Naive thymus-derived CD4-positive, alpha-beta T cell (primary cell): ENCODE measurements at regions of chr5 and their contacts with region 1.

Region 1: GRCh38 chr5:140261403-140262171 is 41.3 kb downstream of the PFDN1 start:
- DNase-seq: peak in 2 of 9 donors; percentile 27
- ATAC-seq: peak; percentile 91
- H3K4me3 ChIP-seq: no peak overlapping the region
- H3K4me3 Mint-ChIP-seq: peak overlapping the region in 2 of 10 donors; percentile 10 to 18
- H3K27ac ChIP-seq: no peak overlapping the region
- H3K27ac Mint-ChIP-seq: peak overlapping the region in 7 of 9 donors; percentile 10 to 85 (median 50)
- H3K4me1 ChIP-seq: peaks cover 11 to 27% of the 10 kb centered on the region in 2 donors
- H3K4me1 Mint-ChIP-seq: peaks cover 25 to 67% (median 62%) of the 10 kb centered on the region in 7 donors
- H3K27me3 ChIP-seq: no peaks in the 10 kb centered on the region
- H3K27me3 Mint-ChIP-seq: no peaks in the 10 kb centered on the region

Region 2: DNA sequence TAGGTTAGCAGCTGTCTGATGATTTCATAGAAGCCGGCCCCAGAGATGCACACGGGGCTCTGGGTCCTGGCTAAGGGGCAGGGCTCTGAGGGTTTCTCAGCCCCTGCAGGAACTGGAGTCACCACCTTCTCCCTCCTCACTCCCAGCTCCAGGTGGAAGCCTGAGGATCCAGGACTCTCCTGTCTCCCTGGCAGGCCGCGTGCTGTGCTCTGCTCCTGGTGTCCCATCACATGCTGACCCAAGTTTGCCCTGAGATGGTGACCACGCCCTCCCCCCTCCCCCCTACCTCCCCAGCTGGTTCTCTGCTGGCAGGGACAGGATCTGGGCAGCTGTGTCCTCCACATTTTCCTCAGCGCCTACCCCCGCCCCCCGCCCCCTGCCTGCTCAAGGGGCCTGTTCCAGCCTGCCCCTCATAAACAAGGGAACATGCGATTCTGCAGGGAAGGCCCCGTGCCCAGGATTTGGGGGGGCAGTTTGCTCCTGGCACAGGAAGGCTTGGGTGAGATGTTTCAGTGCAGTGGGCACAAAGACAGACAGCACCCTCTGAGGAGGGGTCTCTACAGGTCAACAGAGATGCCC is 378.5 kb before region 1 on chr5:
- CTCF ChIA-PET with region 1: no interaction called
- POLR2A ChIA-PET with region 1: no interaction called
- intact Hi-C with region 1: no loop called
- DNase-seq: no peak
- ATAC-seq: no peak
- H3K4me3 ChIP-seq: no peak overlapping the region
- H3K4me3 Mint-ChIP-seq: no peak overlapping the region
- H3K27ac ChIP-seq: no peak overlapping the region
- H3K27ac Mint-ChIP-seq: no peak overlapping the region
- H3K4me1 ChIP-seq: no peaks in the 10 kb centered on the region
- H3K4me1 Mint-ChIP-seq: peaks cover 0 to 2% (median 0%) of the 10 kb centered on the region in 7 donors
- H3K27me3 ChIP-seq: no peaks in the 10 kb centered on the region
- H3K27me3 Mint-ChIP-seq: peaks cover 0 to 9% (median 4%) of the 10 kb centered on the region in 5 donors

Region 3: DNA sequence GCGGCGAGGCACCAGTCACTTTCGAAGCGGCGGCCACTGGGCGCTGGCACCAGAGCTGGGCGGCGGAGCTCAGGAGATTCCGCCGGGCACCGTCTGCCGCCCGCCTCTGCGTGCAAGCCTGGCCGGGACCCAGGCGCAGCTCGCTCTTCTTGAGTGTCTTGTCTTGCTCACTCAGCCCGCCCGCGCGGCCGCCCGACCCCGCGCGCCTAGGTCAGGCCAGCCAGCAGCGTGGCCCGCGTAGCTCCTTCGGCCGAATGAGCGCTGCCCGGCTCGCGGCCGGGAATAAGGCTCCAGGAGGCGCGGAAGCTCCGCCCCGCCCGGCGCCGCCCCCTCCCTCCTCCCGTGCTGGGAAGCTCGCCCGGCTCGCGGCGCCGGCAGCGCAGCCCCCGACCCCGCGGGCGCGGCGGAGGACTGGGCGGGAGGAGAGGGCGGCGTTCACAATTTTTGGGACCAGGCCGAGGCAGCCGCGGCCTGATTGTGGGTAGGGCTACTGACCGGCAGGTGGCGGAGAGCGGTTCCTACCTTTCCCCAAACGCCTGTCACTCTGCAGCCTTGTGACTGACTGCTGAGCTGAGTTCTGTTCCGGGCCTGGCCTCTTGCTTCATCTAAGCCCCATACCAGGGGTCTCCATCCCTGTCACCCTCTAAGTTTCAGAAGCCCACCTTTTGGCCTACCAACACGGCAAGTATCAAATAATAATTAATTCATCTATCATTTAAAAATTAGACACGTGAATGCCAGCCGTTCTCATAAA is 84.9 kb after region 1 on chr5 and contains the start of gene HBEGF:
- CTCF ChIA-PET with region 1: no interaction called
- POLR2A ChIA-PET with region 1: no interaction called
- intact Hi-C with region 1: loop called in 1 of 2 experiments (anchors 5 kb)
- DNase-seq: peak; percentile 19 to 74 (median 42)
- ATAC-seq: peak; percentile 73
- H3K4me3 ChIP-seq: peak within 1 kb of the TSS; percentile 49
- H3K4me3 Mint-ChIP-seq: peak within 1 kb of the TSS; percentile 73 to 91 (median 84)
- H3K27ac ChIP-seq: peak within 1 kb of the TSS; percentile 57
- H3K27ac Mint-ChIP-seq: peak within 1 kb of the TSS in 8 of 9 donors; percentile 33 to 94 (median 62)
- H3K4me1 ChIP-seq: peaks cover 10 to 40% of the 10 kb centered on the region in 2 donors
- H3K4me1 Mint-ChIP-seq: peaks cover 33 to 68% (median 52%) of the 10 kb centered on the region in 7 donors
- H3K27me3 ChIP-seq: no peaks in the 10 kb centered on the region
- H3K27me3 Mint-ChIP-seq: peaks cover 0 to 17% (median 5%) of the 10 kb centered on the region in 5 donors
- total RNA-seq, gene HBEGF: 0.35 to 95.5 (median 11.6) TPM

Region 4: DNA sequence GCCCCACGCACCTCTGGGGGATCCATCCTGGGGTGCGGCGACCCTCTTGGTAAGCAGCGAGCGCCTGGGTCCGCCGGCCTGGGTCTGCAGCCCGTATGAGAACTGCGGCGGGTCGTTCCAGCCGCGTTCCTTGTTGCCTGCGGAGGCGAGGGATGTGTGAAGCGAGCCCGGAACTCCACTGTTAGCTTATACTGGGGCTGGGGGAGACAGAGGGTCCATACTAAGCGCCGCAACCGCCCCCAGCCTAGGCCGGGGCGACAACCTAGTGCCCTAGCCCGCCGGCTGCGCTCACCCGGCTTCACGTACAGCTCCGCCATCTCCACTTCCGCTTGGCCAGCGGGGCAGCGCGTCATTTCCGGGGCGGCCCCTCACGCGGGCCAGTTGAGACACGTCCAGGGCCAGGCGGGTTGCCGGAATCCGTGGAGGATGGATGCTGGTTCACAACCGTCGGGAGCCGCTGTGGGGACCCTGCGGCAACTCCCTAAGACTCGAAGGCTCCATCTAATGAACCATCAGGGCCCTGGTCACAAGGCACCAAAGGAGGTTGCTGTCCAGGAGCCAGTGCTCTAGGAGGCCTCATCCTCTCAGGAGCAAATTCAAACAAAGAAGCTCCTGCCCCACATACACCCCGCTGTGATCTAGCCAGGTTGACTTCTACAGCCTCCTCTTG is 295.7 kb after region 1 on chr5 and contains the start of gene SRA1:
- CTCF ChIA-PET with region 1: no interaction called
- POLR2A ChIA-PET with region 1: no interaction called
- intact Hi-C with region 1: no loop called
- DNase-seq: peak; percentile 62 to 91 (median 72)
- ATAC-seq: peak; percentile 94
- H3K4me3 ChIP-seq: peak within 1 kb of the TSS; percentile 73
- H3K4me3 Mint-ChIP-seq: peak within 1 kb of the TSS; percentile 84 to 93 (median 92)
- H3K27ac ChIP-seq: peak within 1 kb of the TSS; percentile 97
- H3K27ac Mint-ChIP-seq: peak within 1 kb of the TSS; percentile 85 to 97 (median 95)
- H3K4me1 ChIP-seq: peaks cover 14 to 20% of the 10 kb centered on the region in 2 donors
- H3K4me1 Mint-ChIP-seq: peaks cover 45 to 63% (median 50%) of the 10 kb centered on the region in 7 donors
- H3K27me3 ChIP-seq: no peaks in the 10 kb centered on the region
- H3K27me3 Mint-ChIP-seq: no peaks in the 10 kb centered on the region
- total RNA-seq, gene SRA1: 23.8 to 45.5 (median 34.0) TPM